Transverse colon (tissue), 4 donors: ENCODE measurements at regions of chr16 and their contacts with region 1.

Region 1: GRCh38 chr16:14399378-14400284 is 230.4 kb downstream of the PARN start:
- DNase-seq: no peak
- H3K4me3 ChIP-seq: no peak overlapping the region
- H3K27ac ChIP-seq: peak overlapping the region in 3 of 4 donors; percentile 46 to 53 (median 51)
- H3K4me1 ChIP-seq: peaks cover 0 to 4% (median 2%) of the 10 kb centered on the region in 4 donors
- H3K27me3 ChIP-seq: no peaks in the 10 kb centered on the region
- CTCF ChIP-seq: no peak
- EP300 ChIP-seq: no peak
- POLR2A ChIP-seq: no peak

Region 2: DNA sequence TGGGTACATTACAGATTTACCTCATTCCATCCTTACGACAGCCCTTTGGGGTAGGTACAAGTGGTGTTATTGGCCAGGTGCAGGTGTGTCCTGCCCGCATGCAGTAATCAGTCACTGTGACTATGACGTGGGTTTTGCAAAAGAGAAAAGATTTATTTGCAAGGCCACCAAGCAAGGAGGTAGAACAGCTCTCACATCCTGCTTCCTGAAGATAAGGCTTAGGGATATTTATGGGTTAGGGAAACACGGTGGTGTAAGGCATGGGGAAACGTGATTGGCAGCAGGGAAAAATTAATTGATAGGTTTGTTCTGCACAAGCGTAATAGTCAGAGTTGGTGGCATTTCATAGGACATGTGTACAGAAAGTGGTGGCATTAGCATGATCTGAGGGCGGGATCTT is 15.7 kb after region 1 on chr16:
- in situ Hi-C with region 1: no loop called
- intact Hi-C with region 1: no loop called
- DNase-seq: no peak
- H3K4me3 ChIP-seq: no peak overlapping the region
- H3K27ac ChIP-seq: no peak overlapping the region
- H3K4me1 ChIP-seq: no peaks in the 10 kb centered on the region
- H3K27me3 ChIP-seq: no peaks in the 10 kb centered on the region
- CTCF ChIP-seq: no peak
- EP300 ChIP-seq: no peak
- POLR2A ChIP-seq: no peak

Region 3: GRCh38 chr16:14455576-14455975 is 55.9 kb after region 1 on chr16:
- in situ Hi-C with region 1: loop called in 1 of 4 experiments (anchors 10 kb)
- intact Hi-C with region 1: no loop called
- DNase-seq: no peak
- H3K4me3 ChIP-seq: no peak overlapping the region
- H3K27ac ChIP-seq: no peak overlapping the region
- H3K4me1 ChIP-seq: no peaks in the 10 kb centered on the region
- H3K27me3 ChIP-seq: no peaks in the 10 kb centered on the region
- CTCF ChIP-seq: no peak
- EP300 ChIP-seq: no peak
- POLR2A ChIP-seq: no peak